ENCODE measurements at regions of chr15 and their contacts with region 1.

Region 1: GRCh38 chr15:84734794-84735479 is 13.5 kb upstream of the ZNF592 start:
- DNase-seq: peak; percentile 83 to 92 (median 89)
- H3K4me3 ChIP-seq: peak overlapping the region in 6 of 7 experiments; percentile 10 to 66 (median 48)
- H3K27ac ChIP-seq: peak overlapping the region in 1 of 2 experiments; percentile 50
- H3K4me1 ChIP-seq: peaks cover 11 to 26% (median 16%) of the 10 kb centered on the region in 4 experiments
- H3K27me3 ChIP-seq: no peaks in the 10 kb centered on the region

Region 2: DNA sequence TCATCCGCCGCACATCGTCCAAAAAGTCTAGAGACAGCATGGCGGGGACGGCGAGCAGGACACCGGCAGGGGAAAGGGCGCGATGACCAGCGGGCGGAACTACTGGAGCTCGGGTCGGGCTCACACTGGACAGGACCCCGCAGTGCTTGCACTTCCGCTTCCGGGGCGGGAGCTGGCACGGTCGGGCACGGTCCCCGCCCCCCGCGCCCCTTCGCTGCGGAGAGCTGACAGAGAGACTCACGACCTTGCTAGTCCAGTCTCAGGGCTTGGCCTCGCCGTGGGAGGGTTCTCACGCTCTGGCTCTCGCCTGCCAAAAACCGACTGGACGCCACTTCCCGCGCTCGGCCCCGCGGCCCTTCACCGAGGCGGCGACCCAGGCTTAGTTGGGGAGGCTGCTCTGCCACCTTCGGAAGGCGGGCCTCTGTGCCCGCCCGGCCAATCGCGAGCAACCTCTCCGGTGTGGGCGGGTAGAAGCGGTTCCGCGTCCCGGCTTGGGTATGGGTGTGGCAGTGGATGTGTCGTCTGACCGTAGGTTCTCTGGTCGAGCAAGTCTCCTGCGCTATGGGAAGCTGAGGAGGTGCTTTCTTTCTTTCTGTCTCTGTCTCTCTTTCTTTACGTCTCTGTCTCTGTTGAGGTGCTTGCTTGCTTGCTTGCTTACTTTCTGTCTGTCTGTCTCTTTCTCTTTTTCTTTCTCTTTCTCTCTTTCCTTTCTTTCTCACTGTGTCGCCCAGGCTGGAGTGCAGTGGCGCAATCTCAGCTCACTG is 18.7 kb before region 1 on chr15 and contains the start of gene SEC11A:
- CTCF ChIA-PET with region 1: interaction called, 14 read pairs
- POLR2A ChIA-PET with region 1: interaction called, 11 read pairs
- DNase-seq: peak; percentile 91 to 93 (median 91)
- H3K4me3 ChIP-seq: peak within 1 kb of the TSS; percentile 94 to 100 (median 99)
- H3K27ac ChIP-seq: peak within 1 kb of the TSS; percentile 42 to 84
- H3K4me1 ChIP-seq: peaks cover 7 to 30% (median 21%) of the 10 kb centered on the region in 4 experiments
- H3K27me3 ChIP-seq: no peaks in the 10 kb centered on the region

Region 3: DNA sequence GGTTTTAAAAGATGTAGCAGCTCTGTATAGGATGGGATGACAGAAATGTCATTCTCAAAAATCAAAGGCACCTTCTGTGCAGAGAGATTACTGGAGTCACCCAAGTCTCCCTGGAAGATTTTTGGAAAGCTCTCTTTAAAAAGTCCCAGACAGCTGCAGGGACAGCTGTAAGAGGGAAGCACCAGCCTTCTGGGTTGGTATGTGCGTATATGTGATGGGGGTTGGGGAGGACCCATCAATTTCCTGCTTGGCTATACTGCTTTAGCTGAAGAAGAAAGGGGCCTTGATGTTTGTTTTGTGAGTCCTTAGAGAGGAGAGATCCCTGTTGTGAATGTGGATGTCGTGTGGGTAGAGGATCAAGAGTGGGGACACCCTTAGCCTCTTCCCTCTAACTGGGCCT is 13.6 kb before region 1 on chr15:
- CTCF ChIA-PET with region 1: interaction called, 14 read pairs
- POLR2A ChIA-PET with region 1: interaction called, 11 read pairs
- DNase-seq: no peak
- H3K4me3 ChIP-seq: no peak overlapping the region
- H3K27ac ChIP-seq: no peak overlapping the region
- H3K4me1 ChIP-seq: peaks cover 4 to 30% (median 13%) of the 10 kb centered on the region in 4 experiments
- H3K27me3 ChIP-seq: no peaks in the 10 kb centered on the region

Region 4: GRCh38 chr15:84748274-84749110 is 13.6 kb after region 1 on chr15 and contains the start of gene ZNF592:
- CTCF ChIA-PET with region 1: interaction called, 23 read pairs
- POLR2A ChIA-PET with region 1: interaction called, 13 read pairs
- DNase-seq: peak; percentile 75 to 91 (median 87)
- H3K4me3 ChIP-seq: peak within 1 kb of the TSS; percentile 59 to 95 (median 87)
- H3K27ac ChIP-seq: peak within 1 kb of the TSS; percentile 77 to 93
- H3K4me1 ChIP-seq: peaks cover 20 to 48% (median 34%) of the 10 kb centered on the region in 4 experiments
- H3K27me3 ChIP-seq: no peaks in the 10 kb centered on the region

Region 5: DNA sequence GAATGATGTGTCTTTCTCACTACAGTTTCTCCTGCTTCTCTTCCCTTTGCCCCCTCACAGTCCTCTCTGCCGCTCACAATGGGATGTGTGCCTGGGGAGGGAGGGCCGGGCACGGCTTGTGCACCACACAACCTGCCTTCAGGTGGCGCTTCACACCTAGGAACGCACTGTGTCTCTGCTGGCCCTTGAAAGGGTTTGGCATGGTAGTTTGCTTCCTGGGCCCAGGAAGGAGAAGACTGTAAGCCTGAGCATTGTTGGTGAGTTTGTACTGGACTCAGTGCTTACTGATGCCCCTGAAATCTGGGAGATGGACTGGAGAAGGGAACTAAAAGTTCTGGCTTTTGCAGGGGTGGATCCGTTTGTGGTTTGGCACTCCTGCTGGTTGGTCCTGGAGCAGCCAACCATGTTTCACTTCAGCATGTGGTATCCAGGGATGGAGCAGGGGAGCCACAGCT is 91.5 kb after region 1 on chr15:
- CTCF ChIA-PET with region 1: no interaction called
- POLR2A ChIA-PET with region 1: no interaction called
- DNase-seq: peak in 1 of 3 donors; percentile 15
- H3K4me3 ChIP-seq: no peak overlapping the region
- H3K27ac ChIP-seq: no peak overlapping the region
- H3K4me1 ChIP-seq: peaks cover 0 to 3% (median 0%) of the 10 kb centered on the region in 4 experiments
- H3K27me3 ChIP-seq: no peaks in the 10 kb centered on the region

Measured in common myeloid progenitor, CD34-positive (primary cell).